ENCODE measurements at regions of chr15 and their contacts with region 1.

Region 1: GRCh38 chr15:78979456-78980320 is 34.8 kb upstream of the CTSH start:
- DNase-seq: peak; percentile 92 to 93
- ATAC-seq: peak; percentile 80 to 94
- H3K4me3 ChIP-seq: no peak overlapping the region
- H3K27ac ChIP-seq: peak overlapping the region; percentile 59 to 80
- H3K4me1 ChIP-seq: peaks cover 5% of the 10 kb centered on the region; the same call in 2 of the 3 replicates
- CTCF ChIP-seq: peak; percentile 90
- EP300 ChIP-seq: no peak
- POLR2A ChIP-seq: no peak
- RAD21 ChIP-seq: peak; percentile 78 to 81

Region 2: GRCh38 chr15:78909791-78910228 is 69.9 kb before region 1 on chr15:
- CTCF ChIA-PET with region 1: interaction called, 128 read pairs
- POLR2A ChIA-PET with region 1: no interaction called
- DNase-seq: peak; percentile 63 to 72
- ATAC-seq: peak; percentile 63 to 83
- H3K4me3 ChIP-seq: no peak overlapping the region
- H3K27ac ChIP-seq: no peak overlapping the region
- H3K4me1 ChIP-seq: peaks cover 21% of the 10 kb centered on the region
- CTCF ChIP-seq: peak; percentile 87
- EP300 ChIP-seq: no peak
- POLR2A ChIP-seq: no peak
- RAD21 ChIP-seq: peak; percentile 75 to 81

Region 3: GRCh38 chr15:78930556-78931401 is 48.9 kb before region 1 on chr15:
- CTCF ChIA-PET with region 1: interaction called, 26 read pairs
- POLR2A ChIA-PET with region 1: no interaction called
- DNase-seq: peak; percentile 68 to 82
- ATAC-seq: peak; percentile 57 to 73
- H3K4me3 ChIP-seq: no peak overlapping the region
- H3K27ac ChIP-seq: peak overlapping the region; percentile 58 to 84; a peak in 5 of 6 replicates
- H3K4me1 ChIP-seq: peaks cover 17% of the 10 kb centered on the region
- CTCF ChIP-seq: no peak
- EP300 ChIP-seq: no peak
- POLR2A ChIP-seq: no peak
- RAD21 ChIP-seq: no peak

Region 4: GRCh38 chr15:78956937-78957336 is 22.8 kb before region 1 on chr15:
- CTCF ChIA-PET with region 1: interaction called, 27 read pairs
- POLR2A ChIA-PET with region 1: no interaction called
- DNase-seq: no peak
- ATAC-seq: no peak
- H3K4me3 ChIP-seq: no peak overlapping the region
- H3K27ac ChIP-seq: no peak overlapping the region
- H3K4me1 ChIP-seq: peaks cover 7% of the 10 kb centered on the region
- CTCF ChIP-seq: no peak
- EP300 ChIP-seq: no peak
- POLR2A ChIP-seq: no peak
- RAD21 ChIP-seq: no peak

Region 5: DNA sequence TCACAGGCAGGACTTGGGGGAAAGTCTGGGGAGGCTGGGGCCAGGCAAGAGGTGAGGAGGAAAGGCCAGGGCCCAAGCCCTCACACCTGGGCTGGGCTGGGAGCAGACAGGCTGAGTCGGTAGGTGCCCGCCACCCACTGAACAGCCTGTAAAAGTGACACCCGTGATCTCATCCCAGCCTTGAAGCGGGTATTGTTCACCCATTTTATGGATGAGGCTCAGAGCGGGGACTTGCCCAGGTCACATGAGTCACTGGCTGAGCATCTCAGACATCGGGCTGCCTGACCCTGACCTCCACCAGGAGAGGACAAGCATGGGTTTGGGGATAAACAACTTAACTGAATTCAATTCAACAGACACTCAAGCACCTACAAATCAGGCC is 17.2 kb after region 1 on chr15:
- CTCF ChIA-PET with region 1: interaction called, 21 read pairs
- POLR2A ChIA-PET with region 1: no interaction called
- DNase-seq: peak in 1 of 2 experiments; percentile 73
- ATAC-seq: peak in 1 of 2 experiments; percentile 51; a peak in 3 of 6 replicates
- H3K4me3 ChIP-seq: no peak overlapping the region
- H3K27ac ChIP-seq: peak overlapping the region; percentile 65 to 74
- H3K4me1 ChIP-seq: peaks cover 18% of the 10 kb centered on the region
- CTCF ChIP-seq: no peak
- EP300 ChIP-seq: no peak
- POLR2A ChIP-seq: no peak
- RAD21 ChIP-seq: no peak

Region 6: DNA sequence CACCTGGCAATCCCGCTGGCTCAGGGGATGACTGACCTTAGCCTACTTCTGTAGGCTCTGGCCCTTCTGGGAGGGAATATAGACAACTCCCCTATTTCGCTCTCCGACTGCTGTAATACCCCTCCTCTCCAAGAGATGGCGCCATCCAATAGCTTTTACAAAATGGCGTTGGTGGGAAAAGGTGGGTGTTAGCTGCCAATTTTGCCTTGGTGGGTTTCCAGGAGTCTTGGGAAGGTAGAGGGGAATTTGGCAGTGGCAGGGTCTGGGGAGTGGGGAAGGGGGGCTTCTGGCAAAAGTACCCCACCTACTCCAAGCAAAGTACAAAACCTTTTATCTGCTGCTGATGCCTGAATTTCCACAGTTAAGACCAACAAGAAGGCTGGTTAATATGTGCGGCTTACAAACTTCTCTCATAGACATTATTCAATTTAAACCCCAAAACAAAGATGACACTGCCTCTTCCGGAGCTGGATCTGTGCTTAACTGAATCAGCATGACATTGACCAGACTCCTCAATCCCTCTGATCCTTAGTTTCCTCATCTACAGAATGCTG is 48.8 kb after region 1 on chr15:
- CTCF ChIA-PET with region 1: interaction called, 16 read pairs
- POLR2A ChIA-PET with region 1: no interaction called
- DNase-seq: peak; percentile 51 to 54
- ATAC-seq: peak in 1 of 2 experiments; percentile 77; a peak in 3 of 6 replicates
- H3K4me3 ChIP-seq: no peak overlapping the region
- H3K27ac ChIP-seq: no peak overlapping the region
- H3K4me1 ChIP-seq: no peaks in the 10 kb centered on the region
- CTCF ChIP-seq: peak; percentile 92
- EP300 ChIP-seq: no peak
- POLR2A ChIP-seq: no peak
- RAD21 ChIP-seq: peak; percentile 92 to 98